Activated T-helper 1 cell treated with anti-CD3 and anti-CD28 coated beads, Interleukin-12 subunit alpha, Interleukin-12 subunit beta, Interleukin-2, Interleukin-4 antibody, amounts not matched to agents 30 ng/mL and 10 ng/mL and 1 ng/mL, durations not matched to agents 14 hours and 24 hours and 36 hours (primary cell): ENCODE measurements at regions of chr12 and their contacts with region 1.

Region 1: DNA sequence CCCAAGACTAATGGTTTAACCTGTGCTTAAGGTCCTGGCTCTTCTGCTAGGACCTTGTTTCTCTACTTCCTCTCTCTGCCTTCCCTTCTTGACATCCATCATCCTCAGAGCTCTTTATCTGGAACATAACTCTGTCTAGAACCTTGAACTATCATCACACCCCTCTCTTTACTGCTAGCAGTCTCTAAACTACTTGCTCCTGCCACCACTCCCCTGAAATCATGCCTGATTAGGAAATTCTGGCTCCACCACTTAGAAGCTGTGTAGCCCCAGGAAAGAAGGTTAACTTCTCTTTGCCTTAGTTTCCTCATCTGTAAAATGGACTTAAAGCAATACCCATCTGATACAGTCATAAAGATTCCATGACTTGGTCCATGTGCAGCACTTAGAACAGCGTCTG is 9.1 kb downstream of the SLC38A1 start:
- DNase-seq: no peak
- H3K4me3 Mint-ChIP-seq: no peak overlapping the region
- H3K27ac Mint-ChIP-seq: no peak overlapping the region
- H3K4me1 Mint-ChIP-seq: peaks cover 33% of the 10 kb centered on the region
- H3K27me3 Mint-ChIP-seq: no peaks in the 10 kb centered on the region

Region 2: GRCh38 chr12:46244273-46244915 is 15.3 kb before region 1 on chr12:
- intact Hi-C with region 1: loop called (anchors 2 kb)
- DNase-seq: no peak
- H3K4me3 Mint-ChIP-seq: no peak overlapping the region
- H3K27ac Mint-ChIP-seq: no peak overlapping the region
- H3K4me1 Mint-ChIP-seq: peaks cover 67% of the 10 kb centered on the region
- H3K27me3 Mint-ChIP-seq: no peaks in the 10 kb centered on the region